Sciatic nerve (tissue), 2 donors: ENCODE measurements at regions of chr14 and their contacts with region 1.

Region 1: DNA sequence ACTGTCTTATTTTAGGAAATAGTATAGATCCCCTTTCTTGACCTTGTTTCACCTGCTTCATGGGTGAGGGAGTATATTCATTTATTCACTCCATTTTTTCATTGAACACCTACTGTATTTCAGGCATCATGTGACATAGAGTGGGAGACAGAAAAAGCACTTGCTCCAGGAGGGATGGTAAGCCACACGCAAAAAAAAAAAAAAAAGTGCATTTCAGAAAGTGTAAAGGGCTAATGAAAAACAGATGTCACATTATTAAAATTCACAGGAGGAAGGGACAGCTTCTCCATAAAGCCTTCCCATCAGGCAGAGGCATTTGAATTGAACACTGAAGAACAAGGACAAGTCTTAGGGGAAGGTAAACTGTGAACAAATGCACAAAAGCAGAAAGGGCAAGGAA is 7.5 kb downstream of the SLC8A3 start:
- DNase-seq: no peak
- ATAC-seq: no peak

Region 2: GRCh38 chr14:70148911-70149595 is 32.2 kb before region 1 on chr14:
- intact Hi-C with region 1: loop called (anchors 1 kb)
- DNase-seq: no peak
- ATAC-seq: no peak